Caco-2 (cell line): ENCODE measurements at regions of chr7 and their contacts with region 1.

Region 1: GRCh38 chr7:141654551-141654950 is 47.4 kb downstream of the DENND11 start:
- DNase-seq: peak; percentile 76 to 77
- H3K4me3 ChIP-seq: no peak overlapping the region
- H3K4me3 Mint-ChIP-seq: no peak overlapping the region
- H3K27ac Mint-ChIP-seq: no peak overlapping the region
- H3K4me1 ChIP-seq: peaks cover 5% of the 10 kb centered on the region; the same call in 1 of the 2 replicates
- H3K4me1 Mint-ChIP-seq: peaks cover 6% of the 10 kb centered on the region
- H3K27me3 ChIP-seq: no peaks in the 10 kb centered on the region
- H3K27me3 Mint-ChIP-seq: no peaks in the 10 kb centered on the region
- CTCF ChIP-seq: peak; percentile 64 to 89

Region 2: DNA sequence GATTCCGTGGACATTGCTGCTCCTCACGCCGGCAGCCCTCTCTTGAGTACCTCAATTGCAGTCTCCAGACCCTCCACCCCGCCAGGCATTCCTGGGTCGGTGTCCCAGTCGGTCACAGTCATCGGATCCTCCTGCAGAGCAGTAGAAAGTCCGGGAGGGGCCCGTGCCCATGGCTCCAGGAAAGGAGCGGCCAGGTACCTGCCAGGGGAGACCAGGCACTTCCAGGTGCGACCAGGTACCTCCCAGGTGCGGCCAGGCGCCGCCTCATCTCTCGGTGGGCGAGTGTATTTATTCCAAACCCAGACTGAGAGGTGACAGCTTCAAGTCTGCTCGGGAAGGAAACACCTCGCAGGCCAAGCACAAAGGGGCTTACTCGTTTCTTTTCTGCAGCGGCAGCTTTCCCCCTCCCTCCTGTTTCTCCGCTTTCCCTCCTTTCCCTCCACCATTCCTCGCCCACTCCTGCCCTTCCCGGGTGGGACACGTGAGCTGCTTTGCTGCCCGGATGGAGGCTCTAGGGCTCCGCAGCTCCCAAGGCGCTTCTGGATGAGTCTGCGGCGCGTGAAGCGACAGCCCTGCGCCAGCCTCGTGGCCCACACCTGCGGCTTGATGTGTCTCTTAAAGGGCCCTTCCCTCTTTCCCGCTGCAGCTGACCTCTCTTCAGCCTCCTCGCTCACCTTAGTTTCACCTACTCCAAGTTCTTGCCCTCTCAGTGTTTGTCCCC is 142.7 kb before region 1 on chr7:
- CTCF ChIA-PET with region 1: no interaction called
- POLR2A ChIA-PET with region 1: no interaction called
- intact Hi-C with region 1: no loop called
- DNase-seq: peak in 1 of 2 experiments; percentile 22
- H3K4me3 ChIP-seq: peak overlapping the region; percentile 42
- H3K4me3 Mint-ChIP-seq: peak overlapping the region; percentile 70
- H3K27ac Mint-ChIP-seq: peak overlapping the region; percentile 14
- H3K4me1 ChIP-seq: no peaks in the 10 kb centered on the region
- H3K4me1 Mint-ChIP-seq: peaks cover 8% of the 10 kb centered on the region
- H3K27me3 ChIP-seq: no peaks in the 10 kb centered on the region; the same call in 1 of the 2 replicates
- H3K27me3 Mint-ChIP-seq: peaks cover 45% of the 10 kb centered on the region
- CTCF ChIP-seq: no peak

Region 3: GRCh38 chr7:141533149-141533949 is 121.2 kb before region 1 on chr7:
- CTCF ChIA-PET with region 1: interaction called, 3 read pairs
- POLR2A ChIA-PET with region 1: no interaction called
- intact Hi-C with region 1: loop called (anchors 1 kb)
- DNase-seq: peak; percentile 46 to 70
- H3K4me3 ChIP-seq: no peak overlapping the region
- H3K4me3 Mint-ChIP-seq: no peak overlapping the region
- H3K27ac Mint-ChIP-seq: no peak overlapping the region
- H3K4me1 ChIP-seq: no peaks in the 10 kb centered on the region
- H3K4me1 Mint-ChIP-seq: no peaks in the 10 kb centered on the region
- H3K27me3 ChIP-seq: peaks cover 3% of the 10 kb centered on the region
- H3K27me3 Mint-ChIP-seq: peaks cover 13% of the 10 kb centered on the region
- CTCF ChIP-seq: peak; percentile 91 to 96

Region 4: GRCh38 chr7:141671705-141672472 is 17.3 kb after region 1 on chr7:
- CTCF ChIA-PET with region 1: interaction called, 5 read pairs
- POLR2A ChIA-PET with region 1: no interaction called
- intact Hi-C with region 1: loop called (anchors 2 kb)
- DNase-seq: peak in 1 of 2 experiments; percentile 22
- H3K4me3 ChIP-seq: no peak overlapping the region
- H3K4me3 Mint-ChIP-seq: no peak overlapping the region
- H3K27ac Mint-ChIP-seq: peak overlapping the region; percentile 84
- H3K4me1 ChIP-seq: no peaks in the 10 kb centered on the region
- H3K4me1 Mint-ChIP-seq: peaks cover 16% of the 10 kb centered on the region
- H3K27me3 ChIP-seq: no peaks in the 10 kb centered on the region
- H3K27me3 Mint-ChIP-seq: no peaks in the 10 kb centered on the region
- CTCF ChIP-seq: no peak

Region 5: GRCh38 chr7:141715794-141716689 is 61.5 kb after region 1 on chr7:
- CTCF ChIA-PET with region 1: interaction called, 11 read pairs
- POLR2A ChIA-PET with region 1: no interaction called
- intact Hi-C with region 1: no loop called
- DNase-seq: no peak
- H3K4me3 ChIP-seq: peak overlapping the region; percentile 24
- H3K4me3 Mint-ChIP-seq: peak overlapping the region; percentile 18
- H3K27ac Mint-ChIP-seq: no peak overlapping the region
- H3K4me1 ChIP-seq: peaks cover 34% of the 10 kb centered on the region
- H3K4me1 Mint-ChIP-seq: peaks cover 14% of the 10 kb centered on the region
- H3K27me3 ChIP-seq: no peaks in the 10 kb centered on the region
- H3K27me3 Mint-ChIP-seq: no peaks in the 10 kb centered on the region
- CTCF ChIP-seq: no peak

Region 6: DNA sequence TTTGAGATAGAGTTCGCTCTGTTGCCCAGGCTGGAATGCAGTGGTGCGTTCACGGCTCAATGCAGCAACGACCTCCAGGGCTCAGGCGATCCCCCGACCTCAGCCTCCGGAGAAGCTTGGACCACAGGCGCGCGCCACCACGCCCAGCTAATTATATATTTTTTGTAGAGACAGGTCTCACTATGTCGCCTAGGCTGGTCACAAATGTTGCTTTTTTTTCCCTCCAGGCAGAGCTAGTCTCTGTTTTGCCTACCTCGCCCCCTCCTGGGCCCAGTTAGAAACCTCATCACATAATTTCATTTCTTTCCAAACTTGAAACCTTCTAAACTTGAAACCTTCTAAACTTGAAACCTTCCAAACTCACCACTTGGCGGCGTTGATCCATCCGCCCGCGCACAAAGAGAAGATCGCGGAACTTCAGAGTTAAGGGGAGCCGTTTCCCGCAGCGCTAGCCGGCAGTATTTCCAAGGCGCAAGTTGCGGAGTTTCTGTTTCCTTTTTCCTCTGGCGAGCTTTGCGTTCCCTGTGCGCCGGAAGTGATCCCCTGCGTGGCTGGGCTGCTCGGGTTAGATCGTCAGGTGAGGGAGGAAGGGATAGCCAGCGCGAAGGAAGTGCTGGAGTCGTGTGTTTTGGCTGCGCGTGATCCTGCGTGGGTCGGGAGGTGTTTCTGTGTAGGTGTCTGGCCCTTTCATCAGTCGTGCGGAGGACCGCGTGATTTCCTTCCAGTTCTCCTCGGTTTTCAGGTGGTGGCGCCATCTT is 83.5 kb after region 1 on chr7 and contains the start of gene SSBP1:
- CTCF ChIA-PET with region 1: interaction called, 65 read pairs
- POLR2A ChIA-PET with region 1: interaction called, 12 read pairs
- intact Hi-C with region 1: loop called (anchors 1 kb)
- DNase-seq: peak; percentile 93 to 94
- H3K4me3 ChIP-seq: peak within 1 kb of the TSS; percentile 87
- H3K4me3 Mint-ChIP-seq: peak within 1 kb of the TSS; percentile 87
- H3K27ac Mint-ChIP-seq: peak within 1 kb of the TSS; percentile 98
- H3K4me1 ChIP-seq: 0 out of 2 replicates have a peak, but pooled peaks cover 5% of the 10 kb centered on the region
- H3K4me1 Mint-ChIP-seq: peaks cover 24% of the 10 kb centered on the region
- H3K27me3 ChIP-seq: no peaks in the 10 kb centered on the region
- H3K27me3 Mint-ChIP-seq: no peaks in the 10 kb centered on the region
- CTCF ChIP-seq: peak; percentile 61 to 92
- total RNA-seq, gene SSBP1: 191 and 199 TPM in 2 replicates

Region 7: GRCh38 chr7:141874787-141875186 is 220.2 kb after region 1 on chr7:
- CTCF ChIA-PET with region 1: no interaction called
- POLR2A ChIA-PET with region 1: no interaction called
- intact Hi-C with region 1: no loop called
- DNase-seq: no peak
- H3K4me3 ChIP-seq: no peak overlapping the region
- H3K4me3 Mint-ChIP-seq: no peak overlapping the region
- H3K27ac Mint-ChIP-seq: no peak overlapping the region
- H3K4me1 ChIP-seq: no peaks in the 10 kb centered on the region
- H3K4me1 Mint-ChIP-seq: no peaks in the 10 kb centered on the region
- H3K27me3 ChIP-seq: no peaks in the 10 kb centered on the region
- H3K27me3 Mint-ChIP-seq: peaks cover 20% of the 10 kb centered on the region
- CTCF ChIP-seq: no peak